ENCODE measurements at regions of chr1 and their contacts with region 1.

Region 1: GRCh38 chr1:226945106-226945857 is 5.2 kb downstream of the COQ8A start:
- DNase-seq: no peak
- ATAC-seq: peak; percentile 22

Region 2: DNA sequence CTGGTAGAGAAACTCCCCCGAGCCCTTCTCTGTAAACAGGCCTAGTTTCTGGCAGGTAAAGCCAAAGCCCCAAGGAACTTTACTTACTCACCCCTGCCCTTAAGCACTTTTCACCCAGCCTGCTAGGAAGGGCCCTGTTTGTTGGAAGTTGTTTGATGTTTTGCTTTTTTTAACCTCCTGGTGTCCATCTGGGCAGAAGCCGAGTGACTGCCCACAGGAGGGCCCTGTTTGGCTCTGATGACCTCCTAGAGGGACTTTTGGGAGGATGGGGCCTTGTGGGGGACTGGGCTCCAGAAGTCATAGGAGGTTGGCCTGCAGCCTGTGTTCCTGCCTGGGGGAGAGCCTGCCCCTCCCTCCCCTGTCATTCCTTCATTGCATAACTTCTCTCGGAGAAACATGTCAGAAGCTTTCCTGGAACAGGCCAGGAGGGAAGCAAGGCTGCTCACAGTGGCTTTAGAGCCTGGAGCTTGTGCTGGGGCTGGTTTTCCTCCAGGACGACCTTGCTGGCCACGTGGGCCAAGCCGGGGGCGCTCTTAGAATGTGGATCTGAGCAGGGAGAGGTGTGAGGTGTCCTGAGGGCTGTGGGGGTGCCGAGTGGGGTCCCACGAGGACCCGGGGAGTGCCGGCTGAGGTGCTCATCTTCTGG is 28.7 kb after region 1 on chr1:
- intact Hi-C with region 1: loop called (anchors 1 kb)
- DNase-seq: peak; percentile 73
- ATAC-seq: peak; percentile 74

Measured in Right ventricle myocardium inferior (tissue), 1 donor.